HEK293 (cell line): ENCODE measurements at regions of chr16 and their contacts with region 1.

Region 1: DNA sequence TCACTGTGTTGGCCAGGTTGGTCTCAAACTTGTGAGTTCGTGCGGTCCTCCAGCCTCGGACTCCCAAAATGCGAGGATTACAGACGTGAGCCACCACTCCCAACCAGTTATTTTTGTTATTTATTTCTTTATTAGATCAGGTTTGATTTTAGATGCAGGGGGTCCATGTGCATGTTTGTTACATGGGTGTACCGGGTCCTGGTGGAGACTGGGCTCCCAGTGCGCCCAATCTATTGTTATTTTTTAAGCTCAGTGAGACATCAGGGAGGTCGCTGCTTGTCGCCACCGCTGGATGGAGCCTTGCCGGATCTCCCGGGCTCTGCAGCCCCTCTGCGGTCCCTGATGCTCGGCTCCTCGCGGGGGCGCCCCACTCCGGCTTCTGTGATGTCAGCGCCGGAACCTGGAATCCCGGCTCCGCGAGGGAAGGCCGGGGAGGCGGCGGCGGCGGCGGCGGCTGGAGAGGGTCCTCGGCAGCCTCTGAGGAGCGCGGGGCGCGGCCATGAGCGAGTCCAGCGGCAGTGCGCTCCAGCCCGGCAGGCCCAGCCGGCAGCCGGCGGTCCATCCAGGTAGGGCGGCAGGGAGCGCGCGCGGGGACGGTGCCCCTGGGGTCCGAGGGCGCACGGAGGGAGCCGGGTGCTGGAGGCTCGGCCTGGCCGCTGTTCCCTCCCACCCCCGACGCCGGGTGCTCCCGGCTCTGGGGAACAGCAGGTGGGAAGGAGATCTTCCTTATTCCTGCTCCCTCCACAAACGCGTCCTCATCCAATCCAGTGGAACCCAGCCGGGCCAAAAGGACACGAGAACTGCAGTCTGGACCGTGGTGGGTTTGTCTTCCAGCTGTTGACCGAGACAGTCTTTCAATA is at the start of gene TMC7:
- H3K4me3 ChIP-seq: peak within 1 kb of the TSS; percentile 66
- H3K27ac ChIP-seq: peak within 1 kb of the TSS; percentile 38; the same call in 1 of the 2 replicates
- H3K4me1 ChIP-seq: no peaks in the 10 kb centered on the region
- CTCF ChIP-seq: peak; percentile 95

Region 2: GRCh38 chr16:19001788-19002187 is 18.0 kb after region 1 on chr16:
- CTCF ChIA-PET with region 1: interaction called, 11 read pairs
- POLR2A ChIA-PET with region 1: interaction called, 8 read pairs
- H3K4me3 ChIP-seq: no peak overlapping the region
- H3K27ac ChIP-seq: no peak overlapping the region
- H3K4me1 ChIP-seq: peaks cover 2% of the 10 kb centered on the region; the same call in 1 of the 2 replicates
- CTCF ChIP-seq: no peak

Region 3: DNA sequence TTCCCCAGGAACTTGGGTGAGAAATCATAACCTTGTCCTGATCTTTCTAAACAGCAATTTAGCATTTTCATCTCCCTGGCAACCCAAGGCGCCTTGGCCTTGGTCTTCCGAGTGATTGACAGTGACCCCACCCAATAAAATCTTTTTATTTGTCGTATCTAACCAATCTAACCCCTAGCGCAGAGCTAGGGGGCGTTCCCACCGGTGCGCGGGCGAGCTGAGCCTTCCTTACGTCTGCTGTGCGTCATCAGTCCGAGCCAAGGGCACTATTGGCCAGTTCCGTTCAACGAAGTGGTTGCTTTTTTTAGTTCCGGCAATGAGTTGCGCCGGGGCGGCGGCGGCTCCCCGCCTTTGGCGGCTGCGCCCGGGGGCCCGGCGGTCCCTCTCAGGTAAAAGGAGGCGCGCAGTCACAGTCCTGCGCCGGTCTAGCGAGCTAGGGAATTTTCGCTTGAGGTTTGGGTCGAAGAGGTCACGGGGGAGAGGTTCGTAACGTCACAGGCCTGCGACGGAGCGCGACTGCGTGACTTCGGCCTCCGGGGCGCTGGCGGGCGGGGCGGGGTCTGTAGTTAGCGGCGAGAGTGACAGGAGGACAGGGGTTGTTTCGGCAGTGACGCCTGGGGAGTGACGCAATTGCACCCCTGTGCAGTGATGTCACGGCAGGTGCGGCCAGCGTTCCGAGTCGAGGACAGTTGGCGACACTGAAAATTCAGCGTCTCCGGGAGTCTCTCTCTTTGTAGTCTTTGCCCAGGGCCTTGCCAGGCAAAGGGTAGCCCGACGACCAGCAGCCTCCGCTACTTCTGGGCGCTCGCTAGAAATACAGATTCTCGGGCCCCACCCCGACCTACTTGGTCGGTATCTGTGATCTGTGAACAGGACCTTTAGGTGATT is 83.8 kb after region 1 on chr16 and contains the start of gene COQ7:
- CTCF ChIA-PET with region 1: interaction called, 53 read pairs
- POLR2A ChIA-PET with region 1: interaction called, 10 read pairs
- H3K4me3 ChIP-seq: peak within 1 kb of the TSS; percentile 82
- H3K27ac ChIP-seq: peak within 1 kb of the TSS; percentile 82
- H3K4me1 ChIP-seq: no peaks in the 10 kb centered on the region
- CTCF ChIP-seq: peak; percentile 15